Common myeloid progenitor, CD34-positive (primary cell): ENCODE measurements at regions of chr9 and their contacts with region 1.

Region 1: DNA sequence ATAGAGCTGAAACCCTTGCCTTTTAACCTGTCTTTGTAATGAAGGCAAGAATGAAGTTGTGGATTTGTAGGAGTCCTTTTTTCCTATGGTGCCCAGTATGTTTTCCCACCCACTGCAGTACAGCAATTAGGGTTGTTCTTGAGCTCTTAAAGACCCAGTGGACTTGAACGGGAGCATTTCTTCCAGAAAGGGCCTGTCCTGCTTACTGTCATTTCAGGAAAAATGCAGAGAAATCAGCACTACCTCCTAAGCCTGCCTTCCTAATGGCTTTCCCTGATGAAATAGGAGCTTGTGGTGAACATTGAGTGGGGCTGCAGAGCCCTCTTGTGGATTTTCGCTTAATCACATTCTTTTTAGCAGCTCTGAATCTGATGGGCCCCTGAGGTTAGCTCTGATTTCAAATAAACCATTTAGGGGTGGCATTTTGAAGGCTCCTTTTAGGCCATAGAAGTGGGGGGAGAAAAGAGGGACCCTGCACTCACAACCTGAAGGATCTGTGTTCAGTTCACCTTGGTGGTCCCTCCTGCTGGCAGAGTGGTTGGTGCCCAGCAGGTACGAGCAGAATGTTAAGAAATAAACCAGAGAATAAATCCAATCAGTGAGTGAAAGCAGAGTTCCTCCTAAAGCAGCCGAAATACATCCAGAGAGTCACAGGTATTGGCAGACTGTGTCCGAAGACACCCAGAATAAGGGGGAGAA is 188.0 kb upstream of the KLF9 start:
- DNase-seq: peak; percentile 62 to 72 (median 64)
- H3K4me3 ChIP-seq: no peak overlapping the region
- H3K27ac ChIP-seq: no peak overlapping the region
- H3K4me1 ChIP-seq: peaks cover 0 to 13% (median 4%) of the 10 kb centered on the region in 4 experiments
- H3K27me3 ChIP-seq: no peaks in the 10 kb centered on the region

Region 2: GRCh38 chr9:70340572-70340971 is 261.9 kb before region 1 on chr9:
- CTCF ChIA-PET with region 1: interaction called, 38 read pairs
- POLR2A ChIA-PET with region 1: interaction called, 4 read pairs
- DNase-seq: peak; percentile 36 to 62 (median 57)
- H3K4me3 ChIP-seq: no peak overlapping the region
- H3K27ac ChIP-seq: no peak overlapping the region
- H3K4me1 ChIP-seq: no peaks in the 10 kb centered on the region
- H3K27me3 ChIP-seq: no peaks in the 10 kb centered on the region

Region 3: GRCh38 chr9:70347046-70347445 is 255.4 kb before region 1 on chr9:
- CTCF ChIA-PET with region 1: interaction called, 16 read pairs
- POLR2A ChIA-PET with region 1: no interaction called
- DNase-seq: no peak
- H3K4me3 ChIP-seq: no peak overlapping the region
- H3K27ac ChIP-seq: no peak overlapping the region
- H3K4me1 ChIP-seq: no peaks in the 10 kb centered on the region
- H3K27me3 ChIP-seq: no peaks in the 10 kb centered on the region

Region 4: DNA sequence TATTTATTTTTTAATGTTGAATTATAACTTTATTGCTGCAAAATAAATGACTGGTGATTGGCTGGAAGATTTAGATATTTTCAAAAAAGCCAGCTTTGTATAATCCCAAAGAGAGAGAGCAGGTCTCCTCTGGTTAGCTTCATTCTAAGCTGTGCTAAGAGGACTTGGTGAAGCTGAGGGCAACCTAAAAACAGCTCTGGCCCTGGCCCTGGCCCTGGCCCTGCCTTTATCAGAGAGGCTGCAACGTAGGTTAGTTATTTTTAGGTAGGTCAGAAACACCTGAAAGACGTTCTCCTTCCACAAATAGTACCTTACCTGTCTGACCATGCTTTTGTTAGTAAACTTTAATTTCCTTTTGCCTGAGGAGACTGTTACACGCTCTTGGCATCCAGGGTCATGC is 246.7 kb before region 1 on chr9:
- CTCF ChIA-PET with region 1: interaction called, 10 read pairs
- POLR2A ChIA-PET with region 1: no interaction called
- DNase-seq: no peak
- H3K4me3 ChIP-seq: no peak overlapping the region
- H3K27ac ChIP-seq: no peak overlapping the region
- H3K4me1 ChIP-seq: no peaks in the 10 kb centered on the region
- H3K27me3 ChIP-seq: no peaks in the 10 kb centered on the region

Region 5: DNA sequence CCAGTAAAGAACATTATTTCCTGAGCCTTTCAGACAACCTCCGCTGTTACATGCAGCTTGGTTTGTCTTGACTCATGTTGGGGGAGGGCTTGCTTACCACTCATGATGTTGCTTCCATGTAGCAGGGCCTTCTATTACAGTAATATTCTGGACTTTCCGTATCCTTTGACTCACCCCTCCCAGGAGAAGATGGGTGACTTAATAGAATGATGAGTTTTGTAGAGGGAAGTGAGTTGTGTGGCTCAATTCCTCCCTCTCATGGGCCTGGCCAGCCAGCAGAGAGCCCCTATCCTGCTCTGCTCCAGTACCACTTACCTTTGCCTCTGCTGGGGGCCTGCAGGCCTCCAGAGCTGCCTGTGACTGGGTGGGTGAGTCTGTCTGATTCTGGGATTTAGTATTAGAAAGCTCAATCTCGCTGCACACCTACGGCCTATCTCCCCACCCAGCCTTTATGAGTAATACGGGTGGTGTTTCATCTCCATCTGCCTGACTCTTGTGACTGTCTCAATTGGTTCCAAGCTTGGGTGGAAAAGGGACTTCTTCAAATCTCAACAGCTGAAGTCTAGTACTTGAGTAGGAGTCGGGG is 135.4 kb before region 1 on chr9:
- CTCF ChIA-PET with region 1: no interaction called
- POLR2A ChIA-PET with region 1: no interaction called
- DNase-seq: no peak
- H3K4me3 ChIP-seq: no peak overlapping the region
- H3K27ac ChIP-seq: no peak overlapping the region
- H3K4me1 ChIP-seq: no peaks in the 10 kb centered on the region
- H3K27me3 ChIP-seq: no peaks in the 10 kb centered on the region

Region 6: DNA sequence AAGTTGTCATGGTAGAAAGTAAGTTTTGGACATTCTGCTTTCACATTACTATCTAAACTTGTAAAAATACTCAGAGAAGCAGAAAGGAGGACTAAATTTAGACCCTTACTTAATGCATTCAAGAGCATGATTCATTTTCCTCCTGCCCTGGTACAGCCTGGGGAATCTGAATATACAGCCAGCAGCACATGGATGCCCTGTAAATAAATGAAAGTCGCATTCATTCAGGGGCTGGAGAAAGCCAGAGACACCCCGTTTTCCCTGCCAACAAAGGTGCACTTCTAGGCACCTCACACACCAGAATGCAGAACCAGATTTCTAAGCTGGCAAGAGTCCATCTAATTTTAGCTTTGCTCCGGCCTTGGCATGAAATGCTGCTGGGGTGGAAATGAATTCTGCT is 15.3 kb before region 1 on chr9:
- CTCF ChIA-PET with region 1: interaction called, 10 read pairs
- POLR2A ChIA-PET with region 1: no interaction called
- DNase-seq: no peak
- H3K4me3 ChIP-seq: no peak overlapping the region
- H3K27ac ChIP-seq: no peak overlapping the region
- H3K4me1 ChIP-seq: no peaks in the 10 kb centered on the region
- H3K27me3 ChIP-seq: no peaks in the 10 kb centered on the region

Region 7: GRCh38 chr9:70668751-70669150 is 66.3 kb after region 1 on chr9:
- CTCF ChIA-PET with region 1: no interaction called
- POLR2A ChIA-PET with region 1: no interaction called
- DNase-seq: no peak
- H3K4me3 ChIP-seq: no peak overlapping the region
- H3K27ac ChIP-seq: no peak overlapping the region
- H3K4me1 ChIP-seq: no peaks in the 10 kb centered on the region
- H3K27me3 ChIP-seq: no peaks in the 10 kb centered on the region